ENCODE measurements at regions of chr6 and their contacts with region 1.

Region 1: DNA sequence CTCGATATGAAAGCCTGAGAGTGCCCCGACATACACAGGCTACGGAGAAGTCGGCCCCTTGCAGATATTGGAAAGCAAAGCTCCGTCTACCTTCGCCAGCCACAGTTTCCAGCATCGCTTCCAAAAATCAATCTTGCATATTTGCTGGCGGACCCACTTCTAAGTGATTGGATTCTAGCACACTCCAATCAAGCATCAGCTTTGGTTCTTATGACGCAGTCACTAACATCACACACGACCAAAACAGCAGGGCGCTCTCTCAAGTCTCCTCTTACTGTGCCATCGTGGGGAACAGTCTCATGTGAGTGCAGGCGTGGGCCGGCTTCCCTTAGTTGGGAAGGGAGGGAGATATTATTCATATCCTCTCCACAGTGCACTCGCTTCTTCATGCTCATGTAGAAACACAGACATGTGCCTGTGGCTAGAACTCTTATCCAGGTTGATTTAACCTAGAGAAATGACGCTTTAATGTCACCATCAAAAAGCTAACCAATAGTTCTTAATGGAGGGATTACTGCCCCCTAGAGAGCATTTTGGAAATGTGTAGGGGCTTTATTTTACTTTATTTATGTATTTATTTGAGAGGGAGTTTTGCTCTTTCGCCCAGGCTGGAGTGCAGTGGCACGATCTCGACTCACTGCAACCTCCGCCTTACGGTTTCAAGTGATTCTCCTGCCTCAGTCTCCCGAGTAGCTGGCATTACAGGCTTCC is 229.8 kb downstream of the SOD2 start:
- DNase-seq: no peak
- H3K4me3 ChIP-seq: no peak overlapping the region
- H3K27ac ChIP-seq: no peak overlapping the region
- H3K4me1 ChIP-seq: peaks cover 0 to 6% (median 0%) of the 10 kb centered on the region in 4 donors
- H3K27me3 ChIP-seq: no peaks in the 10 kb centered on the region
- CTCF ChIP-seq: peak; percentile 26 to 28

Region 2: DNA sequence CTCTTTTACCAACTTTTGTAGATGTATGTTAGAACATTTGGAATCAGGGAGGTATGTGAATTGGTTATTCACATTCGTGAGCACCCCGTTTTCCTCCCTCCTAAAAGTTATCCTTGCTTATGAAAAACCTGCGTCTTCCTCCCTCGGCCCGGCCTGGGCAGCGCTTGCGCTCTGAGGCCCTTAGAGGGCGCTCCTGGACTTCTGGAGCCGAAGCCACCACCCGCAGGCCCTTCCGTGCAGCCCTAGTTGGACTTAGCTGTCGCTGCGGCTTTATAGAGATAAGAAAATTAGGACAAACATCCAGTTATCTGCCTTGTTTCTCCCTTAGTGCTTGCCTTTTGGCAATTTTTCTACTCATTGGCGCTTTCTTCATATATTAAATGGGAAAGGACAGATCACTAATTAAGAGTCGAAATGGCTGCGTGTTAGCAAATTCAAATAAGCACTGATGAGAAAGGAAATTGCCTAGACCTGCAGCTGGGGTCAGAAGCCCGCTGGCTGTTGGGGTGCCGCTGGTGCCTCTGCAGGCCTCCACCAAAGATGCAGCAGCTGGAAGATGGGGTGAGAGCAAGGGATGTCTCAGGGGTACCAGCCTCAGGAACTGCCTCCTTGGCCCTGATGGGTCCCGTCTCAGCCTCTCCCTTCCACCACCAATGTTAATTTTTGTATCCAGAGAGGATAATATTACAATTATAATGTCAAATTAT is 288.9 kb before region 1 on chr6:
- intact Hi-C with region 1: loop called (anchors 5 kb)
- DNase-seq: peak; percentile 65 to 77
- H3K4me3 ChIP-seq: no peak overlapping the region
- H3K27ac ChIP-seq: no peak overlapping the region
- H3K4me1 ChIP-seq: peaks cover 0 to 24% (median 19%) of the 10 kb centered on the region in 4 donors
- H3K27me3 ChIP-seq: peaks cover 0 to 25% of the 10 kb centered on the region in 2 donors
- CTCF ChIP-seq: peak; percentile 82 to 96

Region 3: DNA sequence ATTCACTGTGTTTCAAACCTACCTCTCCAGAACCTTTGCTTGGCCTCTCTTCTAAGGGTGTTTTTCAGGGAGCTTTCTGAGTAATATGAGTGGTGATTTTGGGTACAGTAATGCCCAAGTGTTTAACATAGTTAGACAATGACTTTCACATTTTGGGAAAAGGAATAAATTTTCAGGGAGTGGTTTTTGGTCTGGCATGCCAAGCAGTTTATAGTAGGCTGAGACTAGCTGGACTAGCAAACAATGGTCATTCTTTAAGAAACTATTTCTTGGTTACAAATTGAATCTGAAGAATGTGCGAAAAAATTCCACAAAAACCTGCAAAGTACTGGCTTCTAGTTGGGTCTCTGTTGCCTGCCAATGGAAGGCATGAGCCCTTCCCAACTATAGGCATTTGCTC is 278.7 kb before region 1 on chr6:
- intact Hi-C with region 1: no loop called
- DNase-seq: no peak
- H3K4me3 ChIP-seq: no peak overlapping the region
- H3K27ac ChIP-seq: no peak overlapping the region
- H3K4me1 ChIP-seq: no peaks in the 10 kb centered on the region
- H3K27me3 ChIP-seq: no peaks in the 10 kb centered on the region
- CTCF ChIP-seq: no peak

Region 4: GRCh38 chr6:159298840-159299239 is 164.4 kb before region 1 on chr6:
- intact Hi-C with region 1: no loop called
- DNase-seq: no peak
- H3K4me3 ChIP-seq: no peak overlapping the region
- H3K27ac ChIP-seq: no peak overlapping the region
- H3K4me1 ChIP-seq: no peaks in the 10 kb centered on the region
- H3K27me3 ChIP-seq: no peaks in the 10 kb centered on the region
- CTCF ChIP-seq: no peak